ENCODE measurements at regions of chr2 and their contacts with region 1.

Region 1: DNA sequence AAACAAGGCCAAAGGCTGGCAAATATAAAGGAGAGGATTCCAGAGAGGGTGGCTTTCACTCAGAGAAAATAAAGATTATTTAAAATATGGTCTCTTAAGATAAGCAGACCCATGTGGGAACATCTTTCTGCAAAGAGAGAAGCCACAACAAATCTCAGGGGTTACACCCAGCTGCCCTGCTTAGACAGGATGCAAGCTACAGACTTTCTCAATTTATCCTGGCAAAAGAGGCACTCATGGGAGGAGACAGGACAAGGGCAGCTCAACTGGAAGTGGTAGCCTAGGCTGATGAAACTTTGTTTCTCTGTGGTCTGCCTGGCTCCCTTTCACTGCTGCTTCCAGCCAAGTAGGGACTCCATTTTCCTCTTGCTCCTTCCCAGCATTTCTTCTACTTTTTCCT is 25.9 kb upstream of the SULT1C4 start:
- DNase-seq: no peak
- ATAC-seq: no peak
- H3K4me3 ChIP-seq: no peak overlapping the region
- H3K27ac ChIP-seq: no peak overlapping the region
- H3K4me1 ChIP-seq: no peaks in the 10 kb centered on the region
- H3K27me3 ChIP-seq: no peaks in the 10 kb centered on the region
- CTCF ChIP-seq: no peak

Region 2: GRCh38 chr2:108477099-108477498 is 125.2 kb after region 1 on chr2:
- CTCF ChIA-PET with region 1: interaction called, 11 read pairs
- POLR2A ChIA-PET with region 1: no interaction called
- in situ Hi-C with region 1: no loop called
- intact Hi-C with region 1: no loop called
- DNase-seq: no peak
- ATAC-seq: no peak
- H3K4me3 ChIP-seq: no peak overlapping the region
- H3K27ac ChIP-seq: no peak overlapping the region
- H3K4me1 ChIP-seq: no peaks in the 10 kb centered on the region
- H3K27me3 ChIP-seq: no peaks in the 10 kb centered on the region
- CTCF ChIP-seq: no peak